ENCODE measurements at regions of chr12 and their contacts with region 1.

Region 1: GRCh38 chr12:54368709-54369583 is 4.7 kb upstream of the GPR84 start:
- DNase-seq: peak; percentile 76 to 81
- ATAC-seq: peak; percentile 73 to 78
- H3K4me3 ChIP-seq: peak overlapping the region; percentile 46 to 68 (median 48)
- H3K27ac ChIP-seq: peak overlapping the region; percentile 34 to 60 (median 50)
- H3K4me1 ChIP-seq: peaks cover 29 to 30% of the 10 kb centered on the region in 2 donors
- H3K27me3 ChIP-seq: no peaks in the 10 kb centered on the region
- CTCF ChIP-seq: peak; percentile 74 to 87 (median 79)
- POLR2A ChIP-seq: no peak

Region 2: DNA sequence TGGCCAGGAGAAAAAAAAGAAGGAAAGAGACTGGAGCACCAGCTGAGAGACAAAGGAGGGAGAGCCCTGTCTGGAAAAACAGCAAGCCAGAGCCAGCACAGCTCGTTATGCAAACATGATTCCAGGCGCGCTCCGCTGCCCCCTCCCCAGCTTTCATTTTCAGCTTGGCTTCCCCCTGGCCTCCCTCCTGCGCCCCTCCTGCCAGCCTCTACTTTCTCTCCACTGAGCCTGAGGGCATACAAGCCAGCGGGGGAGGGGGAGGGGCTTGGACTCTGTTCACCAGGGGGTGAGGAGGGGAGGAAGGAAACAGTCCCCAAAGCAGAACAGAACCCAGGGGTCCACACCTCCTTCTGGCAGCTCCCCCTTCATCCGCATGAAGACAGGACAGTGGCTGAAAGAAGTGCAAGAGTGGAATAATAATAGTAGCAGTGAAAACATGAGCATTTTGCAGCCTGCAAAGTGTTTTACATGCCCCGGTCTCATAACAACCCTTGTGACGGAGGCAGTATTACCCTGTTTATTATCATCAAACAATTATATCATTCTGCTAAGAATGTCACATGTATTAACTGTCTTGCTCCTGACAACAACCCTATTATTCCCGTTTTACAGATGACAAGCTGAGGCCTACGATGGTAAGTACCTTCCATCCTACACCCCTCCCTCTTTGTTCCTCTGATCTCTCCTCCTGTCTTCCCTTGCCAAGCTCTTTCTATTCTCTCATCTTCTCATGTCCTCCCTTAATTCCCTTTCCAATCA is 204.4 kb before region 1 on chr12:
- in situ Hi-C with region 1: no loop called
- intact Hi-C with region 1: no loop called
- DNase-seq: no peak
- ATAC-seq: no peak
- H3K4me3 ChIP-seq: no peak overlapping the region
- H3K27ac ChIP-seq: no peak overlapping the region
- H3K4me1 ChIP-seq: peaks cover 16 to 27% of the 10 kb centered on the region in 2 donors
- H3K27me3 ChIP-seq: no peaks in the 10 kb centered on the region
- CTCF ChIP-seq: no peak
- POLR2A ChIP-seq: no peak

Region 3: GRCh38 chr12:54214553-54215406 is 154.2 kb before region 1 on chr12:
- in situ Hi-C with region 1: loop called in 1 of 4 experiments (anchors 5 kb)
- intact Hi-C with region 1: no loop called
- DNase-seq: peak; percentile 80 to 86
- ATAC-seq: peak; percentile 89 to 94
- H3K4me3 ChIP-seq: peak overlapping the region; percentile 35 to 48 (median 42)
- H3K27ac ChIP-seq: no peak overlapping the region
- H3K4me1 ChIP-seq: peaks cover 15% of the 10 kb centered on the region in 2 donors
- H3K27me3 ChIP-seq: peaks cover 0 to 4% (median 3%) of the 10 kb centered on the region in 3 donors
- CTCF ChIP-seq: peak; percentile 96 to 100 (median 97)
- POLR2A ChIP-seq: no peak

Region 4: GRCh38 chr12:54220092-54220557 is 148.8 kb before region 1 on chr12:
- in situ Hi-C with region 1: loop called (anchors 5 to 10 kb)
- intact Hi-C with region 1: no loop called
- DNase-seq: peak in 1 of 2 donors; percentile 55
- ATAC-seq: peak; percentile 70 to 79
- H3K4me3 ChIP-seq: no peak overlapping the region
- H3K27ac ChIP-seq: no peak overlapping the region
- H3K4me1 ChIP-seq: peaks cover 12 to 15% of the 10 kb centered on the region in 2 donors
- H3K27me3 ChIP-seq: peaks cover 0 to 4% (median 3%) of the 10 kb centered on the region in 3 donors
- CTCF ChIP-seq: peak; percentile 67 to 84 (median 80)
- POLR2A ChIP-seq: no peak

Region 5: DNA sequence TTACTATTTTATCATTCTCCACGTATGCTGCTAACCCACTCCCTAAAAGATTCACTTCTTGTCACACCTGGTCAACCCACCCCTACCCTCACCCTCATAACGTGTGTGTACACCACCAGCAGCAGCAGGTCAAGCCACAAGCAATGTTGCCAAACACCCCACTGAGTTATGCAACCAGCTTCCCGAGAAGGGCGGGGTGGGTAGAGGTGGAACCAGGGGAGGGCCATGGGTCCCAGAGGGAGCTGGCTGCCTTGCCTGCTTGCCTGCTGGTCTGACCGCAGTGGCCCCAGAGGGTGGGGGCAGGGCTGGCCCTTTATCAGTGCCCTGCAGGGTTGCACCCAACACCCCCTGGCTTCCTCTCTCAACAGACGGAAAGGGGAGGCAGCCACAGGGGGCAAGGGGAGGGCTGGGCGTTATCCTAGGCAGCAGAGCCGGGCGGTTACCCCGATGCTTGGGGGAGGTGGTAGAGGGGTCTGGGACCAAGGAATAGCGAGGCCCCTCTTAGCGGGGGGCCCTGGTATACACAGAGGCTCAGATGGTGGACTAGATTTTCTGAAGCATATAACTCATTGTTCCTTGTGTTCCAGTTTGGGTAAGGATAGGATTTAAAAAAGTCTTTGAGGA is 64.6 kb before region 1 on chr12:
- in situ Hi-C with region 1: no loop called
- intact Hi-C with region 1: no loop called
- DNase-seq: peak; percentile 28 to 79
- ATAC-seq: peak; percentile 54 to 81
- H3K4me3 ChIP-seq: no peak overlapping the region
- H3K27ac ChIP-seq: peak overlapping the region in 1 of 4 donors; percentile 32
- H3K4me1 ChIP-seq: peaks cover 17 to 24% of the 10 kb centered on the region in 2 donors
- H3K27me3 ChIP-seq: no peaks in the 10 kb centered on the region
- CTCF ChIP-seq: no peak
- POLR2A ChIP-seq: no peak

Region 6: GRCh38 chr12:54379401-54380201 is 10.7 kb after region 1 on chr12:
- in situ Hi-C with region 1: no loop called
- intact Hi-C with region 1: loop called (anchors 1 kb)
- DNase-seq: peak; percentile 86 to 90
- ATAC-seq: peak; percentile 81 to 91
- H3K4me3 ChIP-seq: peak overlapping the region; percentile 44 to 78 (median 51)
- H3K27ac ChIP-seq: peak overlapping the region; percentile 72 to 80 (median 78)
- H3K4me1 ChIP-seq: peaks cover 30 to 54% of the 10 kb centered on the region in 2 donors
- H3K27me3 ChIP-seq: no peaks in the 10 kb centered on the region
- CTCF ChIP-seq: peak; percentile 98 to 100 (median 100)
- POLR2A ChIP-seq: no peak